ENCODE measurements at regions of chr6 and their contacts with region 1.

Region 1: GRCh38 chr6:20665290-20665689 is 131.0 kb downstream of the CDKAL1 start:
- DNase-seq: no peak
- H3K4me3 ChIP-seq: no peak overlapping the region
- H3K27ac ChIP-seq: no peak overlapping the region
- H3K4me1 ChIP-seq: no peaks in the 10 kb centered on the region
- CTCF ChIP-seq: no peak

Region 2: GRCh38 chr6:19320111-19320581 is 1345.1 kb before region 1 on chr6:
- CTCF ChIA-PET with region 1: no interaction called
- POLR2A ChIA-PET with region 1: no interaction called
- intact Hi-C with region 1: no loop called
- DNase-seq: no peak
- H3K4me3 ChIP-seq: no peak overlapping the region
- H3K27ac ChIP-seq: no peak overlapping the region
- H3K4me1 ChIP-seq: no peaks in the 10 kb centered on the region
- CTCF ChIP-seq: no peak

Region 3: GRCh38 chr6:20630617-20631548 is 34.4 kb before region 1 on chr6:
- CTCF ChIA-PET with region 1: no interaction called
- POLR2A ChIA-PET with region 1: no interaction called
- intact Hi-C with region 1: no loop called
- DNase-seq: no peak
- H3K4me3 ChIP-seq: no peak overlapping the region
- H3K27ac ChIP-seq: no peak overlapping the region
- H3K4me1 ChIP-seq: no peaks in the 10 kb centered on the region
- CTCF ChIP-seq: no peak

Region 4: DNA sequence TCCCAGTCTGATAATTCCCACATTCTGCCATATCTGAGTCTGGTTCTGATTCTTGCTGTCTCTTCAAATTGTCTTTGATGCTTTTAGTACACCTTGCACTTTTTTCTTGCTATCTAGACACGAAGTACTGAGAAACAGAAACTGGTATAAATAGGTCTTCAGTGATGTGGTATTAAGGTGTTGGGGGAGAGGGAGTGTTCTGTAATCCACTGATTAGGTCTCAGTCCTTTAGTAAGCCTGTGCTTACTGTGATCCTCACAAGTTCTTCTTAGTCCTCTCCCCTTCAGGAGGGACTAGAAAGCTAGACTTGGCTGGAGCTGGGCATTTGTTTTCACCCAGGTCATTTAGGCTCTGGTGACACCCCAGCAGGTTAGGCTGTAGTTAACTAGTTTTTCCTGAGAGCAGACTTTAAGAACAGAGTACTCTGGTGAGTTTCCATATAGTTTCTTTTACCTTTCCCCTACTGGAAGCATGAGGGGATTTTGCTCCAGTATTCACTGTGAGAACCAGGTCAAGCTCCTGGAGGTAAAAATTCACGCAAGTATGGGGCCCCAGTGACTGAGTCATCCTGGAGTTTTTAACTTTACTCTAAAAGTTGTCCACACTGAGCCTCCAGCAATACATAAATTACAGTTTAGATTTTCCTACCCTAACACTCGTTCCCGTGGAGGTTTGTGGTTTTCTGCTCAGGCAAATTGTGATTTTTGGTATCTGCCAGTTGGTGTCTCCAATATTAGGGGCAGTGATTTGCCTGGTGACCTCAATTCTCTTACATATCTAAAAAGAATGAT is 23.6 kb after region 1 on chr6:
- CTCF ChIA-PET with region 1: no interaction called
- POLR2A ChIA-PET with region 1: no interaction called
- intact Hi-C with region 1: no loop called
- DNase-seq: no peak
- H3K4me3 ChIP-seq: no peak overlapping the region
- H3K27ac ChIP-seq: no peak overlapping the region
- H3K4me1 ChIP-seq: no peaks in the 10 kb centered on the region
- CTCF ChIP-seq: no peak

Region 5: GRCh38 chr6:21098134-21098533 is 432.8 kb after region 1 on chr6:
- CTCF ChIA-PET with region 1: no interaction called
- POLR2A ChIA-PET with region 1: interaction called, 11 read pairs
- intact Hi-C with region 1: no loop called
- DNase-seq: no peak
- H3K4me3 ChIP-seq: no peak overlapping the region
- H3K27ac ChIP-seq: no peak overlapping the region
- H3K4me1 ChIP-seq: peaks cover 11% of the 10 kb centered on the region
- CTCF ChIP-seq: no peak